Astrocyte of the cerebellum (primary cell): ENCODE measurements at regions of chr10 and their contacts with region 1.

Region 1: GRCh38 chr10:66799474-66799873 is 126.4 kb upstream of the LRRTM3 start:
- DNase-seq: no peak
- H3K4me3 ChIP-seq: no peak overlapping the region
- CTCF ChIP-seq: no peak

Region 2: GRCh38 chr10:66564287-66564686 is 235.2 kb before region 1 on chr10:
- in situ Hi-C with region 1: no loop called
- DNase-seq: no peak
- H3K4me3 ChIP-seq: no peak overlapping the region
- CTCF ChIP-seq: no peak

Region 3: DNA sequence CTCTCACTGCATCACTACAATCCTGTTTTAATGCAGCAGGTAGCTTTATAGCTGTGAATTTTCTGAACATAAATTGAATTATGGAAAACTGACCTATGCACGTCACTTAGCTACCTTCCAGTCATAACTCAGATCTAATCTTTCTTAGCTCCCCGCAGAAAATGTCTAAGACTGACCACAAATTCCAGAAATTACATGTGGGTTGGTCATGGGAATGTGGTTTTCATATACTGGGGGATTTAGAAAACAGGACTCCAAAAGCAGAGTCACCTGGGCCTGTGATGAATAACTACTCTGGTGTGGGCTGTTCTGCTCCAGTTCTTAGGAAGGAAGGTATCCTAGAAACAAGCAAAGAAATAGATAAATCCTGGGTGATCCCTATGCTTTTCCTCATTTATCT is 52.0 kb before region 1 on chr10:
- in situ Hi-C with region 1: loop called (anchors 5 kb)
- DNase-seq: peak; percentile 94
- H3K4me3 ChIP-seq: no peak overlapping the region
- CTCF ChIP-seq: no peak

Region 4: GRCh38 chr10:67110286-67110685 is 310.8 kb after region 1 on chr10:
- in situ Hi-C with region 1: no loop called
- DNase-seq: no peak
- H3K4me3 ChIP-seq: no peak overlapping the region
- CTCF ChIP-seq: no peak